Naive thymus-derived CD4-positive, alpha-beta T cell (primary cell): ENCODE measurements at regions of chr1 and their contacts with region 1.

Region 1: GRCh38 chr1:185463011-185463410 is 146.0 kb upstream of the IVNS1ABP start:
- DNase-seq: no peak
- ATAC-seq: no peak
- H3K4me3 ChIP-seq: no peak overlapping the region
- H3K4me3 Mint-ChIP-seq: no peak overlapping the region
- H3K27ac ChIP-seq: no peak overlapping the region
- H3K27ac Mint-ChIP-seq: no peak overlapping the region
- H3K4me1 ChIP-seq: no peaks in the 10 kb centered on the region
- H3K4me1 Mint-ChIP-seq: peaks cover 0 to 5% (median 0%) of the 10 kb centered on the region in 7 donors
- H3K27me3 ChIP-seq: no peaks in the 10 kb centered on the region
- H3K27me3 Mint-ChIP-seq: peaks cover 0 to 3% (median 0%) of the 10 kb centered on the region in 5 donors

Region 2: GRCh38 chr1:185517808-185518419 is 54.9 kb after region 1 on chr1:
- CTCF ChIA-PET with region 1: no interaction called
- POLR2A ChIA-PET with region 1: no interaction called
- intact Hi-C with region 1: loop called in 1 of 2 experiments (anchors 10 kb)
- DNase-seq: no peak
- ATAC-seq: no peak
- H3K4me3 ChIP-seq: no peak overlapping the region
- H3K4me3 Mint-ChIP-seq: no peak overlapping the region
- H3K27ac ChIP-seq: no peak overlapping the region
- H3K27ac Mint-ChIP-seq: no peak overlapping the region
- H3K4me1 ChIP-seq: no peaks in the 10 kb centered on the region
- H3K4me1 Mint-ChIP-seq: peaks cover 0 to 11% (median 0%) of the 10 kb centered on the region in 7 donors
- H3K27me3 ChIP-seq: no peaks in the 10 kb centered on the region
- H3K27me3 Mint-ChIP-seq: peaks cover 0 to 3% (median 0%) of the 10 kb centered on the region in 5 donors

Region 3: DNA sequence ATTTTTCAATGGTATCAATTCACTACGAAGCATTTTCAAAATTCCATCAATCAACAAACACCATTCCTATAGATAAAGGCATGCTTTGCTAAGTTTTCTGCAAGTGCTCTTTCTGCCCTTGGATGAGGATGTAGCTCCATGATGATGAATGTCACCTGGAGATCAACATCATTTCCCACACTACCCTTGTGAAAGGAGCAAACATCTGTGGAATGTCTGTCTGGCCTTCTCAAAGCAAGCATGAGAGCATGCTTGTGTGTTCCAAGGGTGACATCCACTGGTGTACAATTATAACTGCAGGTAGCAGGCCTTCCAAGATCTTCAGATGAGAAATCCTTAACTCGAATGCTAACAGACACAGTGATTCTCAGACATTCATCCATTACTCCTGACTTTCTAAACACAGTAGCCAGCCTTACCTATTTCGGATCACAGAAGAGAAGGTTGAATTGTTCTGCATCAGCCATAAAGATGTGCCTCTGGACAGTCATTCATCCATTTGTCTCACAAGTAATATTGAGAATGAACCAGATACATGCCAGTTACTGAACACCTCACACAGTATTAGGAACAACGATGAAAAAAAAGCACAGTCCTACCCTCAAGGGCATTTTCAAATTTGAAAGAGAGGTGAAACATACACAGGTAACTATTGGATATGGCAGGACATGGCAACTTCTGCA is 749.7 kb after region 1 on chr1:
- CTCF ChIA-PET with region 1: no interaction called
- POLR2A ChIA-PET with region 1: no interaction called
- intact Hi-C with region 1: no loop called
- DNase-seq: peak in 6 of 9 donors; percentile 12 to 35 (median 28)
- ATAC-seq: peak; percentile 57
- H3K4me3 ChIP-seq: no peak overlapping the region
- H3K4me3 Mint-ChIP-seq: no peak overlapping the region
- H3K27ac ChIP-seq: no peak overlapping the region
- H3K27ac Mint-ChIP-seq: no peak overlapping the region
- H3K4me1 ChIP-seq: no peaks in the 10 kb centered on the region
- H3K4me1 Mint-ChIP-seq: peaks cover 0 to 2% (median 0%) of the 10 kb centered on the region in 7 donors
- H3K27me3 ChIP-seq: no peaks in the 10 kb centered on the region
- H3K27me3 Mint-ChIP-seq: peaks cover 24 to 53% (median 47%) of the 10 kb centered on the region in 5 donors